ENCODE measurements at regions of chr3 and their contacts with region 1.

Region 1: DNA sequence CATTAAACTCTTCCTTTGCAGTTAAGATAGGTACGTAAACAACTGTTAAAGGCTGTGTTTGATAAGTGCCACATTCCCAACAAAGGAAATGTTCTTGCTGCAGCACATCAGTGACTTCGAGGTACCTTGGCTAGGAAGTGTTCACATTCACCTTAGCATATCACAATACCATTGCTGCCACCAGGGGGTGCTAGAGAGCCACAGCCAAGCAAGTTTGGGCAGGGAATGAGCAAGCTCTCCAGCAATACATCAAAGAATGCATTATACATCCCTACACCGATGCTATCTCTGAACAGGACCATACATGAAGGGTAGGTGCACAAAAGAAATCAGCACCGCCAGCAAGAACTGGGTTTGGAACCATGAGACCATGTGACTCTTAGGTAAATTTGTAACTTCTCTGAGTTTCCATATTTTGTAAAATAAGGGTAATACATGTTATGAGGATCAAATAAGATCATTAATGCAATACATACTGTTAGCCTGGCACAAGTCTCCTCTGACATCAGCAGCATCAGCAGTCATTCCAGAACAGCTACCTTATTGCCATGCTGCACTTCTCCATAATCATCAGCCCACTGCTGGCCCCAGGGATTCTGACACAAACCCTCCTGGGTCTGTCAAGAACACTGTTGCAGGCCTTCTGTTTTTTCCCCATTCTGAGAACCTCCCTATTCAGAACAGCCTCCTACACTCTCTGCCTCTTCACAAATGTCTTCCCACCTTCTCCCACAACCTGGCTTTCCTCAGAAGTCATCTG is 37.6 kb downstream of the RYK start:
- DNase-seq: peak; percentile 61 to 86 (median 79)
- H3K4me3 ChIP-seq: no peak overlapping the region
- H3K4me3 Mint-ChIP-seq: no peak overlapping the region
- H3K27ac ChIP-seq: no peak overlapping the region
- H3K27ac Mint-ChIP-seq: peak overlapping the region in 4 of 8 donors; percentile 27 to 89 (median 55)
- H3K4me1 ChIP-seq: no peaks in the 10 kb centered on the region
- H3K4me1 Mint-ChIP-seq: peaks cover 24 to 32% (median 31%) of the 10 kb centered on the region in 3 donors
- H3K27me3 ChIP-seq: no peaks in the 10 kb centered on the region
- H3K27me3 Mint-ChIP-seq: no peaks in the 10 kb centered on the region

Region 2: DNA sequence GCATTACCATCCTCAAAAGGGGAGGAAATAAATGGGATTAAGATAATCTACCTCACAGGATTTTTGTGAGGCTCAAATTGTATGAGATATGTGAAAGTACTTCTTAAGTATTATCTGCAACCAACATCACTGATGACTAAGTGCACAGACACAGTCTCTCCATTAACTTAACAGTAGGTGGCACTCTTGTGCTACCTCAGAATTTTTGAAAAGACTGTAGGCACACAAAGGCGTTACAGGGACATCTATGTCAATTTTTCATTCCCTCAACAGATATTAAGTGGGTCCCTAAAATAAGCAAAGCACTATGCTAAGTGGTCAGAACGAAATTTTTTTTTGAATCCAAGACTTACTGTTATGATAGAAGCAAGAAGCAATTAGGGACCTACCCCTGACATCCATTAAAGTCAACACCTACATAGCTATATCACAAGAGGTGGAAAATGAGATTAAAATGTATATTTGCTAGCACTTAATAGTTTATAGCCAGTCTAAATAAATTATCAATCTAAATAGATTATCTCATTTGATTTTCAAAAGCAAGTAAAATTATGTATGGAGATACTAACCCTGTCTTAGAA is 15.3 kb before region 1 on chr3:
- CTCF ChIA-PET with region 1: interaction called, 30 read pairs
- POLR2A ChIA-PET with region 1: no interaction called
- DNase-seq: peak in 2 of 5 donors; percentile 21 to 33
- H3K4me3 ChIP-seq: no peak overlapping the region
- H3K4me3 Mint-ChIP-seq: no peak overlapping the region
- H3K27ac ChIP-seq: no peak overlapping the region
- H3K27ac Mint-ChIP-seq: no peak overlapping the region
- H3K4me1 ChIP-seq: no peaks in the 10 kb centered on the region
- H3K4me1 Mint-ChIP-seq: peaks cover 0 to 5% (median 0%) of the 10 kb centered on the region in 3 donors
- H3K27me3 ChIP-seq: no peaks in the 10 kb centered on the region
- H3K27me3 Mint-ChIP-seq: no peaks in the 10 kb centered on the region

Region 3: GRCh38 chr3:134242649-134243617 is 29.8 kb after region 1 on chr3:
- CTCF ChIA-PET with region 1: interaction called, 11 read pairs
- POLR2A ChIA-PET with region 1: no interaction called
- DNase-seq: no peak
- H3K4me3 ChIP-seq: no peak overlapping the region
- H3K4me3 Mint-ChIP-seq: peak overlapping the region in 3 of 7 donors; percentile 0 to 24 (median 4)
- H3K27ac ChIP-seq: no peak overlapping the region
- H3K27ac Mint-ChIP-seq: peak overlapping the region in 2 of 8 donors; percentile 51 to 58
- H3K4me1 ChIP-seq: peaks cover 35% of the 10 kb centered on the region
- H3K4me1 Mint-ChIP-seq: peaks cover 65 to 95% (median 87%) of the 10 kb centered on the region in 3 donors
- H3K27me3 ChIP-seq: no peaks in the 10 kb centered on the region
- H3K27me3 Mint-ChIP-seq: no peaks in the 10 kb centered on the region

Region 4: GRCh38 chr3:134308350-134308891 is 95.3 kb after region 1 on chr3:
- CTCF ChIA-PET with region 1: interaction called, 14 read pairs
- POLR2A ChIA-PET with region 1: no interaction called
- DNase-seq: peak; percentile 50 to 76 (median 62)
- H3K4me3 ChIP-seq: peak overlapping the region; percentile 7
- H3K4me3 Mint-ChIP-seq: peak overlapping the region in 4 of 7 donors; percentile 2 to 53 (median 34)
- H3K27ac ChIP-seq: no peak overlapping the region
- H3K27ac Mint-ChIP-seq: peak overlapping the region in 1 of 8 donors; percentile 8
- H3K4me1 ChIP-seq: no peaks in the 10 kb centered on the region
- H3K4me1 Mint-ChIP-seq: peaks cover 5 to 7% (median 5%) of the 10 kb centered on the region in 3 donors
- H3K27me3 ChIP-seq: peaks cover 5% of the 10 kb centered on the region
- H3K27me3 Mint-ChIP-seq: peaks cover 36 to 49% of the 10 kb centered on the region in 2 donors